GM12878 (cell line): ENCODE measurements at regions of chr1 and their contacts with region 1.

Region 1: DNA sequence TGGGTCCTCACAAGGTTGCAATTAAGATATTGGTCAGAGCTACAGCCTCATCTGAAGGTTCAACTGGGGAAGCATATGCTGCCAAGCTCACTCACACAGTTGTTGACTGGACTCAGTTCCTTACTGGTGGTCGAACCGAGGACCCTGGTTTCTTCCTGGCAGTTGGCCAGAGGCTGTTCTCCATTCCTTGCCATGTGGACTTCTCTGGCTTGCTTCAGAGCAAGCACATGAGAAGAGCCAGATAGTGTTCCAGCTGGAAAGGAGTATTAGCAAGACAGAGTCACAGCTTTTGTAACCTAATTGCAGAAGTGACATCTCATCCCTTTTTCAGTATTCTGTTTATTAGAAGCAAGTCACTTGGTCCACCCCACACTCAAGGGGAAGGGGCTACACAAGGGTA is 23.6 kb downstream of the POU2F1 start:
- DNase-seq: no peak
- ATAC-seq: no peak
- H3K4me3 ChIP-seq: no peak overlapping the region
- H3K27ac ChIP-seq: no peak overlapping the region
- H3K4me1 ChIP-seq: peaks cover 12% of the 10 kb centered on the region
- H3K27me3 ChIP-seq: no peaks in the 10 kb centered on the region
- CTCF ChIP-seq: no peak
- EP300 ChIP-seq: no peak
- POLR2A ChIP-seq: no peak
- RAD21 ChIP-seq: no peak

Region 2: DNA sequence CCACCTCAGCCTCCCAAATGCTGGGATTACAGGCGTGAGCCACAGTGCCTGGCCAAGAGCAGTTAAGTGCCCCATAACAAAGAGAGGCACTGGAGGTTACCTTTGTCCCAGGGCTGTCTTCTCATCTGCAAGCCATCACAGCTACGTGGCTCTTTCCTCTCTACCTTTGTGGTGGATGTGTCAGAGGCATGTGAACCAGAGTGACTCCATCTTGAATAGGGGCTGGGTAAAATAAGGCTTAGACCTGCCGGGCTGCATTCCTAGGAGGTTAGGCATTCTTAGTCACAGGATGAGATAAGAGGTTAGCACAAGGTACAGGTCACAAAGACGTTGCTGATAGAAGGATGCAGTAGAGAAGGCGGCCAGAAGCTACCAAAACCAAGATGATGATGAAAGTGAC is 83.0 kb before region 1 on chr1:
- CTCF ChIA-PET with region 1: no interaction called
- POLR2A ChIA-PET with region 1: no interaction called
- RAD21 ChIA-PET with region 1: no interaction called
- SMC1A ChIA-PET with region 1: no interaction called
- in situ Hi-C with region 1: no loop called
- intact Hi-C with region 1: no loop called
- DNase-seq: no peak
- ATAC-seq: no peak
- H3K4me3 ChIP-seq: no peak overlapping the region
- H3K27ac ChIP-seq: no peak overlapping the region
- H3K4me1 ChIP-seq: no peaks in the 10 kb centered on the region
- H3K27me3 ChIP-seq: no peaks in the 10 kb centered on the region; a peak in 1 of 4 replicates
- CTCF ChIP-seq: no peak
- EP300 ChIP-seq: no peak
- POLR2A ChIP-seq: no peak
- RAD21 ChIP-seq: no peak

Region 3: GRCh38 chr1:167198518-167199133 is 45.6 kb before region 1 on chr1:
- CTCF ChIA-PET with region 1: no interaction called
- POLR2A ChIA-PET with region 1: no interaction called
- RAD21 ChIA-PET with region 1: no interaction called
- SMC1A ChIA-PET with region 1: no interaction called
- in situ Hi-C with region 1: no loop called
- intact Hi-C with region 1: no loop called
- DNase-seq: no peak
- ATAC-seq: no peak
- H3K4me3 ChIP-seq: no peak overlapping the region
- H3K27ac ChIP-seq: no peak overlapping the region
- H3K4me1 ChIP-seq: no peaks in the 10 kb centered on the region
- H3K27me3 ChIP-seq: no peaks in the 10 kb centered on the region
- CTCF ChIP-seq: no peak
- EP300 ChIP-seq: no peak
- POLR2A ChIP-seq: no peak
- RAD21 ChIP-seq: no peak

Region 4: DNA sequence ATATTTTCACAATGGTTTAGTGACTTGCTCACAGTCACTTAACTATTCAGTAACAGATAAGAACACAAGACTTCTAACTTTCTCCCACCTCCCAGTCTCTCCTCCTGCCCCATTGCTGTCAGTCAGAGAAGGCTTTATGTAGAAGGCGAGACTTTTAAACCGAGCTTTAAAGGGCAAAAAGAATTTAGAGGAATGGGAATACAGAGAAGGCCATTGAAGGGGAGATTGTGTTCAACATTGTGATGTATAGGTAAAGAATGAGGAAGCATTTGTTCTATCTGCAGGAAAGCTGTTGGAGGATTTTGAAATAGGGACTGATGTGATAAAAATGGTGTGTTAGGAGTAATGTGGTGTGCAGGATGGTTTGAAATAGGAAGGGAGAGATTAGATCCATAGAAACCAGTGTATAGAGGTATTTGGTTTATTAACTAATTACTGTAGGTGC is 16.3 kb before region 1 on chr1:
- CTCF ChIA-PET with region 1: interaction called, 26 read pairs
- POLR2A ChIA-PET with region 1: interaction called, 9 read pairs
- RAD21 ChIA-PET with region 1: interaction called, 10 read pairs
- SMC1A ChIA-PET with region 1: interaction called, 57 read pairs
- in situ Hi-C with region 1: no loop called
- intact Hi-C with region 1: no loop called
- DNase-seq: no peak
- ATAC-seq: no peak
- H3K4me3 ChIP-seq: no peak overlapping the region
- H3K27ac ChIP-seq: no peak overlapping the region
- H3K4me1 ChIP-seq: peaks cover 12% of the 10 kb centered on the region; the same call in 1 of the 2 replicates
- H3K27me3 ChIP-seq: no peaks in the 10 kb centered on the region
- CTCF ChIP-seq: no peak
- EP300 ChIP-seq: no peak
- POLR2A ChIP-seq: no peak
- RAD21 ChIP-seq: no peak

Region 5: GRCh38 chr1:167578939-167579521 is 334.8 kb after region 1 on chr1:
- CTCF ChIA-PET with region 1: no interaction called
- POLR2A ChIA-PET with region 1: no interaction called
- RAD21 ChIA-PET with region 1: no interaction called
- SMC1A ChIA-PET with region 1: no interaction called
- in situ Hi-C with region 1: no loop called
- intact Hi-C with region 1: no loop called
- DNase-seq: no peak
- ATAC-seq: no peak
- H3K4me3 ChIP-seq: no peak overlapping the region
- H3K27ac ChIP-seq: no peak overlapping the region
- H3K4me1 ChIP-seq: no peaks in the 10 kb centered on the region
- H3K27me3 ChIP-seq: 0 out of 4 replicates have a peak, but pooled peaks cover 0 to 1% of the 10 kb centered on the region in 2 experiments
- CTCF ChIP-seq: no peak
- EP300 ChIP-seq: no peak
- POLR2A ChIP-seq: no peak
- RAD21 ChIP-seq: no peak